Heart left ventricle (tissue), 16 donors: ENCODE measurements at regions of chr14 and their contacts with region 1.

Region 1: DNA sequence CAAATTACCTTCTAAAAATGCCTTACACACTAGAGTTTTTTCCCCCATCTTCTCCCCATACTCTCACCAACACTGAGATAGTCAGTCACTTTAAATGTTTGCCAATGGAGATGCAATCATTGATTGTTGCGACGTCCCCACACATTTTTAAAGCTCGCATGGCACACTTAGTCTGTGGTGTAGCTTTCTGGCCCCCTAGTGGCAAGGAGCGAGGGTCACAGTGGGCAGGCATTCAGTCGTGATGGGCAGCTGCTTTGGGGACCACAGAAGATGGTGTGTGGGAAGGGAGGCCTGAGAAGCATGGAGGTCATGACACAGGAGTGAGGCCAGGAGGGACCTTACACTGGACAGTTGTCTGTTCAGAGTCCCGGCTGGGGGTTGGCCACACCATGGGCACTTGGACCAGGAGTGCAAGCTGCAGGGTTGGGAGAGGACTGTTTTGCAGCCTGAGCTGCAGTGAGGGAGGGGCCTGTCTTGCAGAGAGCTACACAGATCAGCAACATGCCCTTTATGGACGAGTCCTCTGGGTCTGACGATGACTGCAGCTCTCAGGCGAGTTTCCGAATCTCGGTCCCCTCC is 28.7 kb downstream of the PIGH start:
- DNase-seq: peak; percentile 47 to 74 (median 63)
- ATAC-seq: peak; percentile 70 to 82 (median 73)
- H3K4me3 ChIP-seq: no peak overlapping the region
- H3K27ac ChIP-seq: no peak overlapping the region
- H3K4me1 ChIP-seq: no peaks in the 10 kb centered on the region
- H3K27me3 ChIP-seq: no peaks in the 10 kb centered on the region
- CTCF ChIP-seq: peak; percentile 67 to 89 (median 80)
- POLR2A ChIP-seq: no peak

Region 2: DNA sequence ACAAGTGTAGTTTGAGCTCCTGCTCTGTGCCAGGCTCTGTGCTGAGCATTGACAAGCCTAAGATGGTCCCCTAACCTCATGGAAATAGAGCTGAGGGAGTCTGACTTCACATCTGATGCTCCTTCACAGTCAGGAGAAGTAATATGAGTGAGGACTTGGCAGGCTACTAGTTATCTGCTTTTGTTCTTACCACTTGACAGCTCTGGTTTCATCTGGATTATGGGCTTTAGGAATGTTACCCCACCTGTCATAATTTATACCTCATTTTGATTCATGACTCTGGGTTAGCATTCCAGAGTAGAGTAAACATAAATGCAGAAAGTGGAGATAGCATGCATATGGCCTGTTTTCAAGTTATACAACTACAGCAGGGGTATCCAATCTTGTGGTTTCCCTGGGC is 252.2 kb before region 1 on chr14:
- intact Hi-C with region 1: no loop called
- DNase-seq: no peak
- ATAC-seq: no peak
- H3K4me3 ChIP-seq: no peak overlapping the region
- H3K27ac ChIP-seq: no peak overlapping the region
- H3K4me1 ChIP-seq: no peaks in the 10 kb centered on the region
- H3K27me3 ChIP-seq: no peaks in the 10 kb centered on the region
- CTCF ChIP-seq: no peak
- POLR2A ChIP-seq: no peak

Region 3: DNA sequence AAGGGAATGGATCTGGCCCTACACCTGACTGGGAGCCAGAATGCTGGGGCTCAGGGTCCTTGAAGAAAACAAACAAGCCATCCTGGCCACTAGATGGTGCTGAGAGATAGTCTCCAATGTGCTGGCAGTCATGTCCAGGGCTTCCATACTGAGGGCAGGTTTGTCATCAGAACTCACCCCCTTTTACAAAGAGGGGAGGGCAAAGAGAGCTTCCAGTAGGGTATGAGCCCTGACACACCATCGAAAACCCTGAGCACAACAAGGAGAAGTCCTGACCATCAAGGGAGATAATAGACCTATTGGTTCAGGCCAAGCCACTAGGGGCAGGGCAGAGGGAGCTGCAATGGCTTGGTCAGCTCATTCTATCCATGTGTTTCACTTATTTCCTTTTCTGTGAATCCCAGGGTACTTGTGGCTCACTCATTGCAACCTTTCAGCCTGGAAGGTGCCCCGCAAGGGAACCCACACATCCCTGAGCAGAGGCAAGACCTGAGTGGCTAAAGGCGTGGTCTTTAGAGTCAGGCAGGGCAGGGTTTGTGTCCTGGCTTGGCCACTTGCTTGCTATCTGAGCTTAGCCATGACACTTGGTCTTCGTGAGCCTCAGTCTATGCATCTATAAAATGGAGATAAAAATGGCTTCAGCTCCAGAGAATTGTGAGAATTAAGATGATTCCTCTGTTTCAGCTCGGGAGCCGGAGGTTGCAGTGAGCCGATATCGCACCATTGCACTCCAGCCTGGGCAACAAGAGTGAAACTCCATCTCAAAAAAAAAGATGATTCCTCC is 44.5 kb before region 1 on chr14:
- intact Hi-C with region 1: loop called in 9 of 10 experiments (anchors 2 to 10 kb)
- DNase-seq: peak in 3 of 5 donors; percentile 13 to 37 (median 24)
- ATAC-seq: peak in 3 of 4 donors; percentile 64 to 76 (median 72)
- H3K4me3 ChIP-seq: no peak overlapping the region
- H3K27ac ChIP-seq: no peak overlapping the region
- H3K4me1 ChIP-seq: no peaks in the 10 kb centered on the region
- H3K27me3 ChIP-seq: peaks cover 0 to 38% (median 0%) of the 10 kb centered on the region in 9 donors
- CTCF ChIP-seq: peak; percentile 31 to 75 (median 57)
- POLR2A ChIP-seq: no peak

Region 4: DNA sequence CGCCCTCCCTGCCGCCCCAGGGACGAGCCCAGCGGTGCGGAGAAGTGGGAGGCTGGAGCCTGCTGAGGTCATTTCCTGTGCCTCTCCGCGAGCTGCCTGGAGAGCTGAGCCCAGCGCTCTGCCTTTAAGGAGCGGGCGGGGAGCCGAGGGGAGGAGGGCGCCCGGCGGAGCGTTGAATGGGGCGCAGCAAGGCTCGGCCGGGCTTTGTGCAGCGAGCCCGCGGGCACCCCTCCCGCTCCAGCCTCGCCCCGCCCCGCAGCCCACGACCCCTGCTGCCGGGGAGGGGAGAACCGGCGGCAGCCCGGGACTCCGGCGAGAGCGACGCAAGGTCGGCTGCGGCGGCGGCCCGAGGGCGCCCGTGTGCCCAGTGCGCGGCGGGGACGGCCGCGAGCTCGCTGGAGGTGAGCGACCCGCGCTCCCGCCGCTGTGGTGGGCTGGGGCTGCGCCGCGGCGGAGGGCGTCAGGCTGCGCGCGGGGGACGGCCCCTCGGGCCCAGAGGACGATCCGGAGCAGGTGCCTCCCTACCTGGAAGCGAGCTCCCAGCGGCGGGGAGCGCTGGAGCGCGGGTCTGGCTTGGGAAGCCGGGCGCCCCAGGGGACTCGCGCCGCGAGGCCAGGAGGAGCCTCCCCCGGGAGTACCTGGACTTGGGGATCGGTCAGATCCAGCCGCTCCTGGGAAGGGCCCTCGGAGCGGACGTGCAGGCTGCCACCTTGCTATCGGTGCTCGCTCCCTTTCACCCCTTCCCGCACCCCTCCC is 38.2 kb before region 1 on chr14 and contains the start of gene PLEKHH1:
- intact Hi-C with region 1: loop called in 7 of 10 experiments (anchors 5 to 10 kb)
- DNase-seq: peak; percentile 80 to 89 (median 81)
- ATAC-seq: peak; percentile 97 to 99 (median 98)
- H3K4me3 ChIP-seq: peak within 1 kb of the TSS; percentile 28 to 79 (median 70)
- H3K27ac ChIP-seq: peak within 1 kb of the TSS in 11 of 12 donors; percentile 19 to 77 (median 53)
- H3K4me1 ChIP-seq: peaks cover 0 to 15% (median 5%) of the 10 kb centered on the region in 12 donors
- H3K27me3 ChIP-seq: peaks cover 0 to 29% (median 0%) of the 10 kb centered on the region in 9 donors
- CTCF ChIP-seq: peak in 1 of 12 donors; percentile 3
- POLR2A ChIP-seq: peak in 1 of 2 donors; percentile 59
- total RNA-seq, gene PLEKHH1: 2.4 to 9.2 (median 5.2) TPM